ENCODE measurements at regions of chr18 and their contacts with region 1.

Region 1: GRCh38 chr18:3604498-3605408 is 154.8 kb downstream of the TGIF1 start:
- DNase-seq: peak; percentile 31
- H3K4me3 Mint-ChIP-seq: no peak overlapping the region
- H3K27ac Mint-ChIP-seq: no peak overlapping the region
- H3K4me1 Mint-ChIP-seq: no peaks in the 10 kb centered on the region
- H3K27me3 Mint-ChIP-seq: no peaks in the 10 kb centered on the region
- CTCF ChIP-seq: no peak

Region 2: GRCh38 chr18:2482706-2483439 is 1121.9 kb before region 1 on chr18:
- CTCF ChIA-PET with region 1: no interaction called
- intact Hi-C with region 1: no loop called
- DNase-seq: no peak
- H3K4me3 Mint-ChIP-seq: no peak overlapping the region
- H3K27ac Mint-ChIP-seq: no peak overlapping the region
- H3K4me1 Mint-ChIP-seq: no peaks in the 10 kb centered on the region
- H3K27me3 Mint-ChIP-seq: no peaks in the 10 kb centered on the region
- CTCF ChIP-seq: no peak

Region 3: DNA sequence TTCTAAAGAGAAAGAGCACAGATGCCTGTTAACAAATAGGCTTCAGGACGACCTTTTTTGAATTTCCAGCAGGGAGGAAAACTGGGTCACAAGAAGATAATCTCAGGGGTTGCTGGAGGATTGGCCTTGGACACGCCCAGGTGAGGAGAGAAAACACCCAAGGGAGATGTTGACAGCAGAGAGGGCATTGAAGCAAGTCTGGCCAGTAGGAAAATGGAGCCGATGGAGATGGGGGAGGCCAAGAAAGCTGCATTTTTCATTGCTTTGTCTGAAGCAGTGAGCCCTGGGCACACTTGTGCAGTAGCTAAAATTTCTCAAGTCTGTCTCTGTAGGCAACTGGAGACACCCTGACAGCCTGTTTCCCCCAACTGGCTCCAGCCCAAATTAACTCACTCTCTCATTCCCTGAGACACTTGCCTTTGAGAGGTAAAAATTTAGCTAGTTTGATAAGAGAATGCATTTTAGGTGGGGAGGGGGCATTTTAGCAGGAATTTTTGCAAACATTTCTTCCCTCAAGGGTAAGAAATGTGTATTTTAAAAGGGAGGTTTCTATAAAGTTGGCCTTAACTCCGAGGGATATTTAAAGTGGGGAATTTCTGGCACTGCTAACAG is 10.7 kb after region 1 on chr18:
- CTCF ChIA-PET with region 1: interaction called, 4 read pairs
- intact Hi-C with region 1: loop called (anchors 1 kb)
- DNase-seq: no peak
- H3K4me3 Mint-ChIP-seq: no peak overlapping the region
- H3K27ac Mint-ChIP-seq: peak overlapping the region; percentile 96
- H3K4me1 Mint-ChIP-seq: peaks cover 58% of the 10 kb centered on the region
- H3K27me3 Mint-ChIP-seq: no peaks in the 10 kb centered on the region
- CTCF ChIP-seq: no peak

Region 4: GRCh38 chr18:3623769-3624545 is 19.2 kb after region 1 on chr18:
- CTCF ChIA-PET with region 1: interaction called, 7 read pairs
- intact Hi-C with region 1: loop called (anchors 2 kb)
- DNase-seq: peak; percentile 88
- H3K4me3 Mint-ChIP-seq: peak overlapping the region; percentile 63
- H3K27ac Mint-ChIP-seq: peak overlapping the region; percentile 98
- H3K4me1 Mint-ChIP-seq: peaks cover 81% of the 10 kb centered on the region
- H3K27me3 Mint-ChIP-seq: no peaks in the 10 kb centered on the region
- CTCF ChIP-seq: no peak

Region 5: GRCh38 chr18:3652380-3653262 is 47.9 kb after region 1 on chr18:
- CTCF ChIA-PET with region 1: interaction called, 7 read pairs
- intact Hi-C with region 1: loop called (anchors 2 kb)
- DNase-seq: peak; percentile 90
- H3K4me3 Mint-ChIP-seq: peak overlapping the region; percentile 67
- H3K27ac Mint-ChIP-seq: peak overlapping the region; percentile 100
- H3K4me1 Mint-ChIP-seq: peaks cover 69% of the 10 kb centered on the region
- H3K27me3 Mint-ChIP-seq: peaks cover 12% of the 10 kb centered on the region
- CTCF ChIP-seq: no peak

Region 6: GRCh38 chr18:3665780-3666525 is 61.2 kb after region 1 on chr18:
- CTCF ChIA-PET with region 1: interaction called, 35 read pairs
- intact Hi-C with region 1: loop called (anchors 1 kb)
- DNase-seq: peak; percentile 88
- H3K4me3 Mint-ChIP-seq: peak overlapping the region; percentile 55
- H3K27ac Mint-ChIP-seq: peak overlapping the region; percentile 83
- H3K4me1 Mint-ChIP-seq: peaks cover 40% of the 10 kb centered on the region
- H3K27me3 Mint-ChIP-seq: no peaks in the 10 kb centered on the region
- CTCF ChIP-seq: peak; percentile 93